ENCODE measurements at regions of chr2 and their contacts with region 1.

Region 1: DNA sequence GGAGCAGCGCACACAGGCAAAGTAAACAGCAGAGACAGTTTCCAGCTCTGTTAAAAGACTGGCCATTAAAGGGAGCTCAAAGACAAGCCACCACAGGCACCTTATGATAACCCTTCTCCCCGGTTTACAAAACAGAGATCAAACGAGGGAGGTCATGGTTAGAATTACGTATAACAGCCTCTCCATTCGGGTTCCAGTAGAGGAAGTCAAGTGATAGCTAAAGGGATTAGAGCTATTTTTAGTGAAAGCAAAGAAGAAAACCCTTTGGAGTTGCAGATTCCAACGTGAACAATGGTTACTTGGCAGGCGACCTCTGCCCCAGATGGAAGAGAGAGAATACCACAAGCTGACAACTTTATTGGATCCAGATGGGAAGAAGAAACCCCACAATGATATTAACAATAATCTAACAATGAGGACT is 31.2 kb upstream of the EDAR start:
- DNase-seq: no peak
- ATAC-seq: no peak
- H3K4me3 ChIP-seq: no peak overlapping the region
- H3K27ac ChIP-seq: no peak overlapping the region
- H3K4me1 ChIP-seq: no peaks in the 10 kb centered on the region
- H3K27me3 ChIP-seq: peaks cover 0 to 4% of the 10 kb centered on the region in 2 experiments; a peak in 2 of 4 replicates
- CTCF ChIP-seq: no peak
- EP300 ChIP-seq: no peak
- POLR2A ChIP-seq: no peak
- RAD21 ChIP-seq: no peak

Region 2: GRCh38 chr2:108776475-108776874 is 243.8 kb before region 1 on chr2:
- CTCF ChIA-PET with region 1: no interaction called
- POLR2A ChIA-PET with region 1: no interaction called
- RAD21 ChIA-PET with region 1: no interaction called
- SMC1A ChIA-PET with region 1: no interaction called
- in situ Hi-C with region 1: no loop called
- intact Hi-C with region 1: no loop called
- DNase-seq: peak; percentile 62
- ATAC-seq: peak; percentile 93
- H3K4me3 ChIP-seq: no peak overlapping the region
- H3K27ac ChIP-seq: peak overlapping the region; percentile 74
- H3K4me1 ChIP-seq: peaks cover 19% of the 10 kb centered on the region
- H3K27me3 ChIP-seq: no peaks in the 10 kb centered on the region
- CTCF ChIP-seq: no peak
- EP300 ChIP-seq: peak; percentile 93 to 95; a peak in 3 of 4 replicates
- POLR2A ChIP-seq: no peak
- RAD21 ChIP-seq: no peak

Region 3: DNA sequence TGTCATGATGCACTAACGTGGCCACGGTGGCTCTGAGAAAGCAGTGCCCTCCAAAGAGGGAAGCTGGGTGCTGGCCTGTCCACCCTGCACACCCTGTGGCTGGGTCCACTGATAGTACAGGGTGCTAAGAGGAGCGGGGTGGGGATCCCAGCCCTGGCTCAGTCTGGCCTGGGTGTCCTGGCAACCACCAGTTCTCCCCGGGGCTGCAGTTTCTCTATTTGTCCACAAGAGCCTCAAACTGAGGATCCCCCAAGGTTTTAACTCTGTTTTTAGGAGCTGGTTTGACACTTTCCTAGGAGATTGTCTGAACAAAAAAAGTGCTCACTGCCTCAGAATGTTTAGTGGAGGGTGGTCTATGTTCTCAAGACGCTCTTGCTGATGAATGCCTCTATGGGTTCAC is 60.2 kb before region 1 on chr2:
- CTCF ChIA-PET with region 1: no interaction called
- POLR2A ChIA-PET with region 1: no interaction called
- RAD21 ChIA-PET with region 1: no interaction called
- SMC1A ChIA-PET with region 1: no interaction called
- in situ Hi-C with region 1: no loop called
- intact Hi-C with region 1: loop called (anchors 5 kb)
- DNase-seq: no peak
- ATAC-seq: peak; percentile 58; the same call in 2 of the 3 replicates
- H3K4me3 ChIP-seq: no peak overlapping the region
- H3K27ac ChIP-seq: no peak overlapping the region
- H3K4me1 ChIP-seq: no peaks in the 10 kb centered on the region
- H3K27me3 ChIP-seq: peaks cover 0 to 3% of the 10 kb centered on the region in 2 experiments; a peak in 3 of 4 replicates
- CTCF ChIP-seq: peak in 1 of 3 experiments; percentile 17; a peak in 1 of 6 replicates
- EP300 ChIP-seq: no peak
- POLR2A ChIP-seq: no peak
- RAD21 ChIP-seq: no peak

Measured in GM12878 (cell line).